Heart left ventricle (tissue), 16 donors: ENCODE measurements at regions of chrX and their contacts with region 1.

Region 1: DNA sequence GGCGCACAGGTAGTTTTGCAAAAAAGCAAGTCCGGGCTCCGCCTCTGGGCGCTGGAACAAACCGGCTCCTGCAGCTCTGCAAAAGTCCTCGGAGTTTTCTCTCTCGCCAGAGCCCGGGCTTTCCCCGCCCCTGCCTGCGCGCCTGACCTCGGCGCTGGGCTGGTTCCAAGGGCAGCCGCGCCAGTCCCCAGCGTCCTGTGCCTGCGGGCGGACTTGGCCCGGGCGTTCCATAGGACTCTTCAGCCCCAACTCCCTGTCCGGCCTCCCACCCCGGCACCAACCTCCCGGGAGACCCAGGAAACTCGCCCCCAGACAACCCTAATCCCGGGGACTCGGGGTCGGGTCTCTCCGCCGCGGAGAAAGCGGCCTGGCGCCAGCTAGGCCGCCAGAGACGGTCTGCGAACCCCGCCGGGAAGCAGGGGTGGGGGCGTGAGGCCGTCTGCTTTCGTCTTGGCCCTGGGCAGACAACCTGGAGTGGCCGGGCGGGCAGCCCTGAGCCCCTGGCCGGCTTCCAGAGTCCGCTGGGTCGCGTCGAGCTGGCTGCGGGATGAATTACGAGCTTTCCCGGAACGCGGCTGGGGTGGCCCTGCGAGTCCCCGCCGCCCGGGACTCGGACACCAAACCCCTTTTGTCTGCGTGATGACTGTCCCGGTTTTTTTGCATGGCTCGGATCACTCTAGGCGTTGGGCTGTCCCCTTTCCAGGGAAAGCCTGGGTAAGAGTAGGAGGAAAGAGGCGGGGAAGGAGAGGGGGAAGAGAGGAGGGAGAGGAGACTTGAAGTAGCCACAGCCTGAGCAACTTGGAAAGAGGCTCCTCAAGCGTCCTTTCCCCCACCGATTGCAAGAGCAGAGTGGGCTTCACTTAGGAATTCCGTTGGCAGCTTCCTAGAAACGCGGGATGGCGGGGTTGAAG is 916 bp downstream of the MXRA5 start:
- DNase-seq: peak; percentile 48 to 80 (median 66)
- ATAC-seq: peak; percentile 32 to 91 (median 85)
- H3K4me3 ChIP-seq: peak overlapping the region; percentile 17 to 69 (median 53)
- H3K27ac ChIP-seq: peak overlapping the region; percentile 51 to 96 (median 71)
- H3K4me1 ChIP-seq: peaks cover 0 to 21% (median 0%) of the 10 kb centered on the region in 12 donors
- H3K27me3 ChIP-seq: peaks cover 0 to 39% (median 10%) of the 10 kb centered on the region in 9 donors
- CTCF ChIP-seq: no peak
- POLR2A ChIP-seq: no peak

Region 2: DNA sequence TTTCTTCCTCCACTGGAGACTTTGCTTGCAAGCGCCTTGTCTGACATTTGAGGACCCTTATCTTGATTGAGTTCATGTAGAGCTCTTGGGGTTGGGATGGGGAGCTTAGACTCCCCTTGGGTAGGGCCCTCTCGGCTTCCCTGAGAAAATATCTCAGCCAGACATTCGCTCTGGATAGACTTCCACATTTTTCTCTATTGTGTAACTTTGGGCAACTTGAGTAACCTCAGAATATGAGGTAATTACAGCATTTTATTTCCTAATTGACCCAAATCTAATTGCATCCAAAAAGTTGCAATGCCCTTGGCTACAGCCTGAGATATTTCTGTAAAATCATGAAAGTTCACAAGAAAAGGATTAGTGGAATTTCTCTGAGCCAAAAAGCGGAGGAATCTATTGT is 103.8 kb after region 1 on chrX:
- intact Hi-C with region 1: loop called in 1 of 10 experiments (anchors 10 kb)
- DNase-seq: no peak
- ATAC-seq: peak in 1 of 4 donors; percentile 74
- H3K4me3 ChIP-seq: no peak overlapping the region
- H3K27ac ChIP-seq: peak overlapping the region in 10 of 12 donors; percentile 22 to 69 (median 46)
- H3K4me1 ChIP-seq: peaks cover 0 to 38% (median 1%) of the 10 kb centered on the region in 12 donors
- H3K27me3 ChIP-seq: no peaks in the 10 kb centered on the region
- CTCF ChIP-seq: no peak
- POLR2A ChIP-seq: no peak

Region 3: DNA sequence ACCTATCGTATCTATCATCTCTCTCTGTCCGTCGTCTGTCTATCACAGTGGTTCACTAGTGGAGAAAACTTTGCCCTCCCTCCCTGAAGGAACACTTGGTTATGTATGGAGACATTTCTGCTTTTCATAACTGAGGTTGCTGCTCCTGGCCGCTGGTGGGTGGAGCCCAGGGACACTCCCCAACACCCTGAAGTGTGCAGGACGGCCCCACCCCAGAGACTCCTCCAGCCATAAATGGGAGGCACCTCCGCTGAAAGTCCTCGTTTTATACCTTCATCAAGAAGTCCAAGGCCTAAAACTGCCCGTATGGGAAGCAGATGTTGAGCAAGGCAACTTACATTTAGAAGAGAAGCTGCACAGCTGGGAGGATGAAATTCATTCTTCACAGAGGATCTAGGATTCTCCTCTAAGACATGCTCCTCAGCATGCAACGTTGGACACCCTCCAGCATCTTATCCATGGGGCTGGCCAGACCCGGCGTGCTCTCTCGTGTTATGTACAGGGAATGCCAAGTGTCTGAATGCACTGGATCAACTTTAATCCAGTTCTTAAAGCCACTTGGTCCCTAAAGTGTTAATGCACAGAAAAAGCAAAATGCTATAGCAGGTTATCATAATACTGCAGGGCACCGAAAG is 324.4 kb after region 1 on chrX:
- intact Hi-C with region 1: no loop called
- DNase-seq: no peak
- ATAC-seq: no peak
- H3K4me3 ChIP-seq: no peak overlapping the region
- H3K27ac ChIP-seq: no peak overlapping the region
- H3K4me1 ChIP-seq: no peaks in the 10 kb centered on the region
- H3K27me3 ChIP-seq: no peaks in the 10 kb centered on the region
- CTCF ChIP-seq: no peak
- POLR2A ChIP-seq: no peak